ENCODE measurements at regions of chr2 and their contacts with region 1.

Region 1: GRCh38 chr2:235453605-235454151 is 40.2 kb upstream of the AGAP1 start:
- DNase-seq: no peak
- H3K4me3 ChIP-seq: no peak overlapping the region
- CTCF ChIP-seq: no peak

Region 2: DNA sequence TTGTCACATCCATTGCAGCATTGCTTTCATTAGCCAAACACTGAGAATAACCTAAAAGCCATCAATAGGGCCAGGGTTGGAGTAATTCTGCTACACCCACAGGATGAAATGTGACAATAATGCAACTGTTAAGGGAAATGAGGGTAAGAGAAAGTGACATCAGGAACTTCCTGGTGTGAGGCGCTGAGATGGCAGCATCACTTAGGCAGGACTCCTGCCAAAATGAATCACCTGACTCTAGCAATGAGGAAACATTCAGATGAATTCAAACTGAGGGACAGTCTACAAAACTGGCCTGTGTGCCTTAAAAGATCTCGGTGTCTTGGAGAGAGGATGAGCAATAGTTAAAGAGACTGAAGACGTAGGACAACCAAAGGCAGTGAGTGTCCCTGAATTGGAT is 75.4 kb before region 1 on chr2:
- in situ Hi-C with region 1: no loop called
- DNase-seq: no peak
- H3K4me3 ChIP-seq: no peak overlapping the region
- CTCF ChIP-seq: no peak

Region 3: DNA sequence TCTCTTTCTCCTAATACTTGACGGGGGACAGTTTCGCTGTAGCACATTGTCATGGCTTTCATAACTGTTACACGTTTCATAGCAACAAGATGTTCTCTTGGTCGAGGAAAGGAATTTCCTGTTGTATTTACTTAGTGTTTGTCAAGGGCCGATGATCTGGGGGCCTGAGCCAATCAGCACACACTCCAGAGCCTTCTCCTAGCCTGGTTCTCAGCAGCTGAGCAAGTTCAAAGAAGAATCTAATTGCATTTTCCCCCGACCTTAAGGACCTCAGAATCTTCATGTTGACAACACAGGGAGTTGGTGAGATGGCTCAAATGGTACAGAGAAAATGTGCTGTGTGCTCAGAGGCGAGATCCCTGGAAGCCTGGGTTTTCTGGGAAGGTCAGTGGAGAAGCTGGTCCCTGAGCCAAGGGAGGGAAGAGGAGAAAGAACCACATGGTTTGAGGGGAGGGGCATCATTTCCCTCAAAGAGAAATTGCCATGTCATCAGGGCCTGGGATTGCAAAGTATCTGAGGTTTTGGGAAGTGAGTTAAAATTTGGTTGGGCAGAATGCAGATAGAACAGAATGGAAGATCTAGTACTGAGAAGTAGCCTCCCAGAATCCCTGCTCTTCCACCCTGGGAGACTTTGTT is 36.7 kb before region 1 on chr2:
- in situ Hi-C with region 1: no loop called
- DNase-seq: peak; percentile 11
- H3K4me3 ChIP-seq: no peak overlapping the region
- CTCF ChIP-seq: no peak

Region 4: DNA sequence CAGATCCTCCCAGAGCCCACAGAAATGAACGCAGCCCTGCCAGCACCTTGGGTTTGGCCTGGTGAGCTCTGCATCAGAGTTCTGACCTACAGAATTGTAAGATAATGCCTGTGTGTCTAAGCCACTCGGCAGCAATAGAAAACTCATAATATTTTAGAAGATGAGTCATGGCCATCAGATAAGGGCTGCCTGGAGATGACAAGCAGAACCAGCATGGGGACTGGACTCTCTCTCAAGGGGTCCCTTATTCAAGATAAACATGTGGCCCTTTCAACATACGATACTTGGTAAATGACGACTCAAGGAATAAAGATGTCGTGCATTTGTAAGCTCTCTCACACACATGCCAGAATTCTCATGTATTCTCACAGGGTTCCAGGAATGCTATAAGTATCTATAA is 31.7 kb after region 1 on chr2:
- in situ Hi-C with region 1: loop called (anchors 5 kb)
- DNase-seq: no peak
- H3K4me3 ChIP-seq: no peak overlapping the region
- CTCF ChIP-seq: no peak

Region 5: GRCh38 chr2:235642446-235643098 is 188.9 kb after region 1 on chr2:
- in situ Hi-C with region 1: no loop called
- DNase-seq: no peak
- H3K4me3 ChIP-seq: no peak overlapping the region
- CTCF ChIP-seq: peak; percentile 21

Measured in astrocyte of the cerebellum (primary cell).